Activated CD8-positive, alpha-beta T cell treated with anti-CD3 and anti-CD28 coated beads for 36 hours (primary cell): ENCODE measurements at regions of chr16 and their contacts with region 1.

Region 1: DNA sequence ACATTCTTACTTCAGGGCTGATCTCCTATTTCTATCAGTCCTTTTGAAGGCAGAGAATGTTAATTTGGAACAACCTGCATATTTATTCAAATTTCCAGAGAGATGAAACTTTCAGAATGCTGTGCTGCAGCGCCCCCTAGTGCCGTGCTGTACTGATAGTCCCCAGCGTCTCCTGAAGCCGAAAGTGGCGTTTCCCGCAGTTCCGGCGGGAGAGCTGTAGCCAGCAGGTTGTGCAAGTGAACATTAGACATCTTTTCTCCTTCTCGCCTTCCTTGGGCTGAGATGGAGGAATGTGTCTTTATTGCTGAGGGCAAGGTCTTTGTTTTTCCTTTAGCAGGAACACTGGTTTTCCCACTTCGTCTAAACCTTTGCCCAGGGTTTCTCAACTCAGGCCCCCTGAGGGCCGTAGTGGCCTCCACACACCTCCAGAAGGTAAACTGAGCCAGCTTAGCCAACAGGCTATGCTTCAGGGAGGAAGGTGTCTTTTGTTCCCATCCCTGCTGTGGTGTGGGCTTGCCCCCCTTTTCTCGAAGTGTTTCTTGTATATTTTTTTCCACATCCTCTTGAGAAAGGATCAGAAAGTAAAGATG is 26.4 kb downstream of the USP10 start:
- DNase-seq: peak; percentile 92
- ATAC-seq: no peak
- H3K4me3 Mint-ChIP-seq: peak overlapping the region; percentile 25
- H3K27ac Mint-ChIP-seq: no peak overlapping the region
- H3K4me1 Mint-ChIP-seq: peaks cover 78% of the 10 kb centered on the region
- H3K27me3 Mint-ChIP-seq: no peaks in the 10 kb centered on the region
- CTCF ChIP-seq: peak; percentile 100

Region 2: GRCh38 chr16:84504420-84505248 is 221.5 kb before region 1 on chr16 and contains the start of gene MEAK7:
- CTCF ChIA-PET with region 1: interaction called, 11 read pairs
- POLR2A ChIA-PET with region 1: no interaction called
- intact Hi-C with region 1: no loop called
- DNase-seq: peak; percentile 99
- ATAC-seq: peak; percentile 96
- H3K4me3 Mint-ChIP-seq: peak within 1 kb of the TSS; percentile 91
- H3K27ac Mint-ChIP-seq: peak within 1 kb of the TSS; percentile 88
- H3K4me1 Mint-ChIP-seq: peaks cover 48% of the 10 kb centered on the region
- H3K27me3 Mint-ChIP-seq: no peaks in the 10 kb centered on the region
- CTCF ChIP-seq: no peak
- total RNA-seq, gene MEAK7: 21.1 to 22.4 TPM

Region 3: DNA sequence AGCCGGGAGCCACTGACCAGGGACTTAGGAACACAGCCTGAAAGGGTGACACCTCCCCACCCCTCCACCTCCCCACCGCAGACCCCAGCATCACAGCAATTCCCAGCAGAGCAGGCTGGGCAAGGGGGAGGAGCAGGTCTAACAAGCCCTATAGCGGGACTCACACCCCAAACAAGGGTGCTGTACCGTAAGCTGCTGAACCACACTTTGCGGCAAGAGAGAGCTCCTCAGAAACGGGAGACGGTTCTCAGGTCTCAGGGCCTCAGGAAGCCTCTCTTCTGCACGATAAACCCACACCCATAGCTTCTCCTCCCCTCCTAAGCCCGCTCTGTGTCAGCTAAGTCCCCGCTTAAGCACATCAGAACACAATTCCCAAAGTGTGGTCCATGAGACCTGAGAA is 96.6 kb before region 1 on chr16:
- CTCF ChIA-PET with region 1: interaction called, 11 read pairs
- POLR2A ChIA-PET with region 1: interaction called, 3 read pairs
- intact Hi-C with region 1: loop called (anchors 10 kb)
- DNase-seq: no peak
- ATAC-seq: peak; percentile 60
- H3K4me3 Mint-ChIP-seq: no peak overlapping the region
- H3K27ac Mint-ChIP-seq: no peak overlapping the region
- H3K4me1 Mint-ChIP-seq: peaks cover 24% of the 10 kb centered on the region
- H3K27me3 Mint-ChIP-seq: peaks cover 2% of the 10 kb centered on the region
- CTCF ChIP-seq: no peak

Region 4: GRCh38 chr16:84663433-84664101 is 62.6 kb before region 1 on chr16:
- CTCF ChIA-PET with region 1: interaction called, 13 read pairs
- POLR2A ChIA-PET with region 1: interaction called, 6 read pairs
- intact Hi-C with region 1: no loop called
- DNase-seq: no peak
- ATAC-seq: no peak
- H3K4me3 Mint-ChIP-seq: no peak overlapping the region
- H3K27ac Mint-ChIP-seq: no peak overlapping the region
- H3K4me1 Mint-ChIP-seq: peaks cover 8% of the 10 kb centered on the region
- H3K27me3 Mint-ChIP-seq: no peaks in the 10 kb centered on the region
- CTCF ChIP-seq: no peak

Region 5: GRCh38 chr16:84687715-84688114 is 38.5 kb before region 1 on chr16:
- CTCF ChIA-PET with region 1: interaction called, 19 read pairs
- POLR2A ChIA-PET with region 1: no interaction called
- intact Hi-C with region 1: no loop called
- DNase-seq: peak; percentile 20
- ATAC-seq: peak; percentile 69
- H3K4me3 Mint-ChIP-seq: no peak overlapping the region
- H3K27ac Mint-ChIP-seq: no peak overlapping the region
- H3K4me1 Mint-ChIP-seq: peaks cover 9% of the 10 kb centered on the region
- H3K27me3 Mint-ChIP-seq: peaks cover 10% of the 10 kb centered on the region
- CTCF ChIP-seq: no peak

Region 6: DNA sequence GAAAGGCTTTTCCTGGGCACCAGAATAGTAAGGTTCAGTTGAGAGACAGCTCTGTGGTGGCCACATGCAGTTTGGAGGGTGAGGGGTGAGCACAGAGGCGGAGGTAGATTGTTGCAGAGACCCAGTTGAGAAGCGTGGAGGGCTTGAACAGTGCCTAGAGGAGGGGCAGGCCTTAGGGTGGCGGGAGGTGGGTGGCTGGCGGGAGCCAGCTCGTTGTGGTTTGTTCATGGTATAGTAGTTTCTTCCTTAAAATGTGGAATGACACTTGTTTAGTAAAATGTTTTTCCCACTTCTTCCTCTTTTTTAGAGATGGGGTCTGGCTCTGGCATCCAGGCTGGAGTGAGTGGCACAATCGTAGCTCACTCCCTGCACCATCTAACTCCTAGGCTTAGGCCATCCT is 12.1 kb before region 1 on chr16:
- CTCF ChIA-PET with region 1: interaction called, 84 read pairs
- POLR2A ChIA-PET with region 1: interaction called, 5 read pairs
- intact Hi-C with region 1: no loop called
- DNase-seq: no peak
- ATAC-seq: no peak
- H3K4me3 Mint-ChIP-seq: no peak overlapping the region
- H3K27ac Mint-ChIP-seq: no peak overlapping the region
- H3K4me1 Mint-ChIP-seq: peaks cover 69% of the 10 kb centered on the region
- H3K27me3 Mint-ChIP-seq: no peaks in the 10 kb centered on the region
- CTCF ChIP-seq: no peak

Region 7: GRCh38 chr16:84754353-84754856 is 28.2 kb after region 1 on chr16:
- CTCF ChIA-PET with region 1: interaction called, 31 read pairs
- POLR2A ChIA-PET with region 1: interaction called, 3 read pairs
- intact Hi-C with region 1: no loop called
- DNase-seq: peak; percentile 78
- ATAC-seq: peak; percentile 84
- H3K4me3 Mint-ChIP-seq: no peak overlapping the region
- H3K27ac Mint-ChIP-seq: peak overlapping the region; percentile 13
- H3K4me1 Mint-ChIP-seq: peaks cover 83% of the 10 kb centered on the region
- H3K27me3 Mint-ChIP-seq: no peaks in the 10 kb centered on the region
- CTCF ChIP-seq: peak; percentile 89